Heart right ventricle (tissue), 16 donors: ENCODE measurements at regions of chr15 and their contacts with region 1.

Region 1: DNA sequence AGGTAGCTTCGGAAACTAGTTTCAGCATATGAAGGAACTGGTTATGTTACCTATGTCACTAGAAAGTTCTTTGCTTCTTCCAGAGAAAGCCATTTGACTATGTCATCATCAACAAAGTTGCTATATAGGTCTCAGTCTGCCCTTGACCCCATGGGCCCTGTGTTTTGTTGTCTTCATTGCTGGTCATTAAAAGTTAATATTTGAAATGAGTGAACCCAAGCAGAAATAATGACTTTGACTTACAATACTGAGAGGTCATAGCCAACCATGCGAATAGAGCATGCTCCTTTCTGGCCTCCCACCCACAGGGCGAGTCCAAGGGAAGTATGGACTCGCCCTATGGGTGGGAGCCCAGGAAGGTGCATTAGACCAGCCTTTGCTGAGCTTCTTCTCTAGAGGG is 40.9 kb downstream of the APH1B start:
- DNase-seq: no peak
- ATAC-seq: no peak
- H3K4me3 ChIP-seq: no peak overlapping the region
- H3K27ac ChIP-seq: no peak overlapping the region
- H3K4me1 ChIP-seq: no peaks in the 10 kb centered on the region
- H3K27me3 ChIP-seq: no peaks in the 10 kb centered on the region
- CTCF ChIP-seq: no peak

Region 2: DNA sequence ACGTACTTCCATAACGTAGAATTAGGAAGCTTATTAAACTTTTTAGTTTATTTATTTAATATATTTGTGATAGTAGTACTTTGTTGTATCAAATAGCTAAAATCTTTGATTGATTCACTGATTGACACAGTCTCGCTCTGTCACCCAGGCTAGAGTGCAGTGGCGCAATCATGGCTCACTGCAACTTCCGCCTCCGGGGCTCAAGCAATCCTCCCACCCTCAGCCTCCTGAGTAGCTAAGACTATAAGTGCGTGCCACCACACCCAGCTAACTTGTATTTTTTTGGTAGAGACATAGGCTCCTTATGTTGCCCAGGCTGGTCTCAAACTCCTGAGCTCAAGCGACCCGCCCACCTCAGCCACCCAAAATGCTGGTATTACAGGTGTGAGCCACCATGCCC is 35.2 kb before region 1 on chr15:
- intact Hi-C with region 1: loop called in 1 of 10 experiments (anchors 1 kb)
- DNase-seq: peak in 1 of 2 donors; percentile 32
- ATAC-seq: peak in 1 of 8 donors; percentile 65
- H3K4me3 ChIP-seq: no peak overlapping the region
- H3K27ac ChIP-seq: peak overlapping the region in 1 of 10 donors; percentile 82
- H3K4me1 ChIP-seq: peaks cover 0 to 27% (median 3%) of the 10 kb centered on the region in 9 donors
- H3K27me3 ChIP-seq: no peaks in the 10 kb centered on the region
- CTCF ChIP-seq: no peak

Region 3: GRCh38 chr15:63389902-63390670 is 71.7 kb after region 1 on chr15:
- intact Hi-C with region 1: no loop called
- DNase-seq: peak in 1 of 2 donors; percentile 22
- ATAC-seq: no peak
- H3K4me3 ChIP-seq: no peak overlapping the region
- H3K27ac ChIP-seq: no peak overlapping the region
- H3K4me1 ChIP-seq: peaks cover 0 to 13% (median 3%) of the 10 kb centered on the region in 9 donors
- H3K27me3 ChIP-seq: peaks cover 0 to 9% (median 0%) of the 10 kb centered on the region in 7 donors
- CTCF ChIP-seq: no peak

Region 4: GRCh38 chr15:63655683-63656372 is 337.5 kb after region 1 on chr15:
- intact Hi-C with region 1: no loop called
- DNase-seq: peak in 1 of 2 donors; percentile 11
- ATAC-seq: peak in 5 of 8 donors; percentile 62 to 88 (median 83)
- H3K4me3 ChIP-seq: no peak overlapping the region
- H3K27ac ChIP-seq: no peak overlapping the region
- H3K4me1 ChIP-seq: no peaks in the 10 kb centered on the region
- H3K27me3 ChIP-seq: no peaks in the 10 kb centered on the region
- CTCF ChIP-seq: no peak